Endothelial cell of umbilical vein (primary cell): ENCODE measurements at regions of chr4 and their contacts with region 1.

Region 1: DNA sequence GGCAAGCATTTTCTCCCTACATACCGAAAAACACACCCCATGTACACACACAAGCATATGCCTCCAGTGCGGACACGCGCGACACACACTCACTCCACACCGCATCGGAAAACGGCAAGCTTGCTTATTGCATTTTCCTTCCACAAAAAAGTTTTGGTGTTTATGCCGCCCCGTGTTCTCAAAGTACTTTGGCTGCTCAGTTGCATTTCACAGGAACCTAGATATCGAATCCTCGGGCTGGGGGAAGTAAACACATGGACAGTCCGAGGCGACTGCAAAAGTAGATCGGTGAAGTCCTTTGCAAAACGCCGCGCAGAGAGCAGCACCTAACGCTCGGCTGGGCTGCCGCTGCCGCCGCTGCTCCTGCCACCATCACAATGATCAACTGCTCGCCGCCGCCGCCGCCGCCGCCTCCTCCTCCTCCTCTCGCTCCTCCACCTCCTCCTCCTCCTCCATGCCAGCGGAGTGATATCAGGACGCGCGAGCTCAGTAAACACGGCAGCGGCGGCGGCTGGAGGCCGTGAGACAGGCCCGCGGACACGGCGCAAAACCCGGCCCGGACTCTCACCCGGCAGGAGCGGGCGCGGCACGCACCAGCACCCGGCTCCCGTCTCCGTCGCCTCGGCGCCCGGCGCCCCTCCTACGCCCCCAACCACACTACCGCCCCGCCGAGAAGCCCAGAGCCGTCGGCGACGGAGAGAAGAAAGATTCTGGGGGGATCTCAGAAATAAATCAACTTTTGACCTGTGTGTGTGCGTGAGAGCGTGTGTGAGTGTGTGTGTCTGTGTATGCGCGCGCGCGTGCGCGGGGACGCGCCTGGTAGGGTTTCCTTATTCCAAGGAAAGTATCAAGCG is at the start of gene MAML3:
- DNase-seq: peak; percentile 95
- H3K4me3 ChIP-seq: peak within 1 kb of the TSS; percentile 64 to 91 (median 67)
- H3K27ac ChIP-seq: peak within 1 kb of the TSS; percentile 99
- H3K4me1 ChIP-seq: peaks cover 10% of the 10 kb centered on the region
- H3K27me3 ChIP-seq: no peaks in the 10 kb centered on the region
- CTCF ChIP-seq: no peak
- POLR2A ChIP-seq: peak; percentile 53
- total RNA-seq, gene MAML3: 20.1 and 20.3 TPM in 2 replicates

Region 2: DNA sequence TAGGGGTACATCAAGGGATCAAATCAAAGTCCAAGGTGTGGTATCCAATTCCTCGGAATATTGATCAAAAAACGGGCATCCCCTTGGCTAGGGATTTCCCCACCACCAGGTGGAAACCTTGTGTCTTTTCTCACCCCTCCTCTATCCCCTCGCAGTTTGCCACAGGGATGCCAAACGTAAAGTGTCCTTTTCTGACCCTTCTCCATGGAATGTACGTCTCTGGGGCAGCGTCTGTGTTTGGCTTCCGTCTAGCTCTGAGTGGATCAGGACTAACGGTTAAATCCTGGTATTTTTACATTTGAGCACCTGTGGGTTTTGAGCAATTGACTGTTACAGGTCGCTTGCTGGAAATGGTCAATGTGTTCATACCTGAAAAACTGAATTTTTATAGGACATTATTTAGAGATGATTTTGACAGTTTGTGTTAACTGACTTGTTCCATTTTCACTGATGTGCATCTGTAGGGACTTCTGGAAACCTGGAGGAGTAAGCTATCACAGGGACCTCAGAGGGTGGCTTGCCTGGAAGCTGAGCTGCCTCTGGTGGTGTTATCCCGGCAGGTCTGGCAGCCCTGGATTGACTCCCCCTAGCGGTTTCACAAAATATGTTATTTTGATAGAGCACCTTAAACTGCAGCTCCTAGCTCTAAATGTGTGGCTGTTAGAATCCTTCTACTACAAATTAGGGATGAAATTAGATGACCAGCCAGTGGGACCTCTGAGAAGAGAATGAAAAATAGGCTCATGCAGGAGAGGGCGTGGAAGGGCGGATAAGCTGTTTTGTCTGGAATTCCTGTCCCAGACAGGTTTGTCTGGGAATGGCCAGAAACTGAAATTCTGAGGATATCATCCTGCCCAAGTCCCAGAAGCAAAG is 497.1 kb before region 1 on chr4:
- CTCF ChIA-PET with region 1: interaction called, 8 read pairs
- POLR2A ChIA-PET with region 1: no interaction called
- dilution Hi-C with region 1: no loop called
- intact Hi-C with region 1: loop called (anchors 1 kb)
- DNase-seq: peak; percentile 76
- H3K4me3 ChIP-seq: peak overlapping the region in 1 of 3 experiments; percentile 30
- H3K27ac ChIP-seq: peak overlapping the region; percentile 94
- H3K4me1 ChIP-seq: peaks cover 45% of the 10 kb centered on the region
- H3K27me3 ChIP-seq: no peaks in the 10 kb centered on the region
- CTCF ChIP-seq: peak; percentile 83 to 86
- POLR2A ChIP-seq: no peak

Region 3: DNA sequence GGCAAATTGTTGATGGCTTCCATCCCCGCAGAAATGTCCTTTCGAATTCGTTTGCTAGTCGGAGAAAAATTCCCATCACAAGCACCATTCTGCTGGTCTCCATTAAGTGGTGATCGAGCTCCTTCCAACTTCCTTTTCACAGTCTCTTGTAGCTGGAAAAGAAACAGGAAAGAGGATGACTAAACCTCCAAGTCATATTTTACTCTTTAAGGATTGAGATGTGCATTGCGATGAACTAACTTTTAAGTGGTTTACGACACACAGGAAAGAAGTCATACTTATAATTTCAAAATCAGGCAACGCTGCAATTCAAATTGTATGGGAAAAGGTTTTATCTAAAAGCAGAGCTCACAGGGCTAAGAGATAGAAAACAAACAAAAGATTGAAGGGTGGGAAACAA is 263.1 kb before region 1 on chr4:
- CTCF ChIA-PET with region 1: no interaction called
- POLR2A ChIA-PET with region 1: no interaction called
- dilution Hi-C with region 1: no loop called
- intact Hi-C with region 1: loop called (anchors 2 kb)
- DNase-seq: peak; percentile 81
- H3K4me3 ChIP-seq: no peak overlapping the region
- H3K27ac ChIP-seq: peak overlapping the region; percentile 51
- H3K4me1 ChIP-seq: peaks cover 24% of the 10 kb centered on the region
- H3K27me3 ChIP-seq: no peaks in the 10 kb centered on the region
- CTCF ChIP-seq: peak; percentile 21 to 22
- POLR2A ChIP-seq: no peak

Region 4: DNA sequence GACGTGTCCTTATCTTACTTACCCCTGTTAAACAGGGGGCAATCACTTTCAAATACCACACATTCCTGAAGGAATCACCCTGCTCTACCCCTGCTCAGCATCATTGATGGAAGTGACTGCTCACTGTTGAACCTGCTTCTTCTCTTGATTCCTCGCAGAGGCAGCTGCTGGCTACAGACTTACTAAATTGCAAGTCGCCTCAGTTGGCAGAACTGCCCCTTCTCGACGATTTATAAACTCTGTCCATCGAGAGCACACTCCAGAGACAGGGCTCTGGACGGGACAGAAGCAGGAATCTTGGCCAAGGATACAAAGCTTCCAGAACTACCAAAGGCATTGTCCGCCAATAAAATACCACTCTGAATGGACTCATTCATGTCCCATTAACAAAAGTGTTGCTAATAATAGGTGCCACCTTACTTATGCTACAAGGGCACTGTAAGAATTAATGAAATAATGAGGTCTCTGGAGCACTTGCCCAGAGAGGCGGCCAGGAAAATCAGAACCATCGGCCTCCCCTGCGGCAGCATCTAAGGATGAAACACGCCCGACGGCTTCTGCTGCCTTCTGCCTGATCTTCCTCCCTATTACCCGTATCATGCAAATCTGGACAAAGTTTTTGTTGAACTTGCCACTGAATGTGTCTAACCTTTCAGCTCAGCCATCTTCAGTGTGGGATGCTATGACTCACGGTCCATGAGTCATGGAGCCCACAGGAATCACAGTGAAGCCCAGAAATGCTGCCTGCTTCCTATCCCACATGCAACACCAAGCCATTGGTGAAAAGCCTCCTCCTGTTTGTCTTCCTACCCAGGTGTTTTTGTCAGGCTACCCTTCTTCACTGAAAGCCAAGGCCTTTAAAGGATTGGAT is 164.8 kb before region 1 on chr4:
- CTCF ChIA-PET with region 1: no interaction called
- POLR2A ChIA-PET with region 1: no interaction called
- dilution Hi-C with region 1: no loop called
- intact Hi-C with region 1: no loop called
- DNase-seq: peak; percentile 97
- H3K4me3 ChIP-seq: no peak overlapping the region
- H3K27ac ChIP-seq: peak overlapping the region; percentile 25
- H3K4me1 ChIP-seq: peaks cover 17% of the 10 kb centered on the region
- H3K27me3 ChIP-seq: no peaks in the 10 kb centered on the region
- CTCF ChIP-seq: no peak
- POLR2A ChIP-seq: no peak

Region 5: DNA sequence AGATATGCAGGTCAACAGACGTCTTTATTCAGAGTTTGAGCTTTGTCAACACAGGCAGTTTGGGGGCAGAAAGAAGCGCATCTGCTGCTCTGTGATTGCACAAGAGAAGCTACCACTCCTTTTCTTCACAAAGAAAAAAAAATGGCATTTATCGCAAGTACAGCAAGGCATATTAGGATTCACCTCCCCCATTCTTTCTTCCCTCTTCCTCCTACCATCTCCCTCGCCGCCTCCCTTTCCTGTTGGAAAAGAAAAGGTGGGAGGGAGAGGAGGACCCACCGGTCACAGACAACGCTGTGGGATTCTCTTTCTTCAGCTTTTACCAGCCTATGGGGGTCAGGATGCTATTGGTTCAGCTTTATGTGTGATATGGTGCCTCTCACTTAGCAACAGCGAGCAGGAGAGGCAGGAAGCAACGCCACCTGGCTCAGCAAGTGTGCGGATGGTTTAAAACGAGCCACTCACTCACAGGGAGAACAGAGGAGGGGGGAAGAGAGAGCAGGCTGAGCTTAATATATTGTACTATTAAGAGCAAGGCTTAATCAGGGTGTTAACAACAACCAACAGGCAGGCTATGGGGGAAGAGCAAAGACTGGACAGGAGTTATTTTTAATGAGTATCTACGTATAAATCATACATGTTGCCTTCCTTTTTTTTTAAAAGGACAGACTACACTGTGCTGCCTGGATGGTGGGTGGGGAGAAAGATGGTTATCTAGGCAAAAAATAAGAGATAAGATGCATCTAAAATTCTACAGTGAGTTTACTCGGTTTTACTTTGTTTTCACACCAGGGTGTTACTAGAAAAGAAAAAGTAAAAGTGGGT is 104.7 kb before region 1 on chr4:
- CTCF ChIA-PET with region 1: interaction called, 35 read pairs
- POLR2A ChIA-PET with region 1: interaction called, 4 read pairs
- dilution Hi-C with region 1: no loop called
- intact Hi-C with region 1: loop called (anchors 1 kb)
- DNase-seq: peak; percentile 85
- H3K4me3 ChIP-seq: peak overlapping the region; percentile 0 to 24 (median 5)
- H3K27ac ChIP-seq: peak overlapping the region; percentile 80
- H3K4me1 ChIP-seq: peaks cover 49% of the 10 kb centered on the region
- H3K27me3 ChIP-seq: no peaks in the 10 kb centered on the region
- CTCF ChIP-seq: no peak
- POLR2A ChIP-seq: no peak

Region 6: GRCh38 chr4:140116442-140117104 is 37.4 kb before region 1 on chr4:
- CTCF ChIA-PET with region 1: no interaction called
- POLR2A ChIA-PET with region 1: no interaction called
- dilution Hi-C with region 1: no loop called
- intact Hi-C with region 1: no loop called
- DNase-seq: peak; percentile 62
- H3K4me3 ChIP-seq: no peak overlapping the region
- H3K27ac ChIP-seq: peak overlapping the region; percentile 18
- H3K4me1 ChIP-seq: peaks cover 16% of the 10 kb centered on the region
- H3K27me3 ChIP-seq: no peaks in the 10 kb centered on the region
- CTCF ChIP-seq: no peak
- POLR2A ChIP-seq: no peak

Region 7: GRCh38 chr4:140222171-140222570 is 68.2 kb after region 1 on chr4:
- CTCF ChIA-PET with region 1: no interaction called
- POLR2A ChIA-PET with region 1: interaction called, 4 read pairs
- dilution Hi-C with region 1: no loop called
- intact Hi-C with region 1: loop called (anchors 1 kb)
- DNase-seq: peak; percentile 66
- H3K4me3 ChIP-seq: no peak overlapping the region
- H3K27ac ChIP-seq: peak overlapping the region; percentile 65
- H3K4me1 ChIP-seq: peaks cover 19% of the 10 kb centered on the region
- H3K27me3 ChIP-seq: no peaks in the 10 kb centered on the region
- CTCF ChIP-seq: no peak
- POLR2A ChIP-seq: no peak

Region 8: DNA sequence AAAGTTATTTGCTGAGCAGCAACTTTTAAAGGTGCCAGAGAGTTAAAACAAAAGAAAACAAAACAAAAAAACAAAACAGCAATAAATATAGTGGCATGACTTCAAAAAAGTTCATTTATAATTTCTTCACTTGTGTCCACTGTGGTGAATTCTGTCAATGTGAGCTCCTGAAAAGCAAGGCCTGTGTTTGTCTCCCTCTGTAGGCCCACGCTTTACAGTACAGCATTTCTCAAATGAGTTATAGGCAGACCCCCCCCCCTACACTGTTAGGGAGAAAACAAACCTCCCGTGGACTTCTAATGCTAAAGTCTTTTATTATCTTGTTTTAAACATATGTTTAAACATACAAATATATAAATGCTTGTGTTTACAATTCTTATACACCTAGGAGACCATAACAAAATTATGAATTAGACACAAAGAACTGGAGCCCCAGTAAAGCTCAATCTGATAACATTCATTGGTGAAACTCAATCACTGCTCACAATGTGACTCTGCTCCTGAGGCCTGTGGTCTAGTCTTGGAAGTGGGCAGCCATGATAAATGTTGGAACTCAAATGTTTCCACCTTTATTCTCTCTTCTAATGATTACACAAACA is 172.5 kb after region 1 on chr4:
- CTCF ChIA-PET with region 1: interaction called, 13 read pairs
- POLR2A ChIA-PET with region 1: no interaction called
- dilution Hi-C with region 1: no loop called
- intact Hi-C with region 1: loop called (anchors 1 kb)
- DNase-seq: peak; percentile 68
- H3K4me3 ChIP-seq: no peak overlapping the region
- H3K27ac ChIP-seq: no peak overlapping the region
- H3K4me1 ChIP-seq: no peaks in the 10 kb centered on the region
- H3K27me3 ChIP-seq: peaks cover 4 to 6% of the 10 kb centered on the region in 2 experiments
- CTCF ChIP-seq: peak; percentile 69
- POLR2A ChIP-seq: no peak